Heart left ventricle (tissue), 16 donors: ENCODE measurements at regions of chr17 and their contacts with region 1.

Region 1: GRCh38 chr17:47229535-47230443 is 20.6 kb downstream of the MYL4 start:
- DNase-seq: peak; percentile 85 to 87 (median 86)
- ATAC-seq: peak; percentile 64 to 85 (median 82)
- H3K4me3 ChIP-seq: peak overlapping the region in 10 of 12 donors; percentile 6 to 44 (median 30)
- H3K27ac ChIP-seq: peak overlapping the region in 6 of 12 donors; percentile 1 to 53 (median 31)
- H3K4me1 ChIP-seq: peaks cover 6 to 35% (median 22%) of the 10 kb centered on the region in 12 donors
- H3K27me3 ChIP-seq: no peaks in the 10 kb centered on the region
- CTCF ChIP-seq: peak; percentile 97 to 100 (median 99)
- POLR2A ChIP-seq: peak in 1 of 2 donors; percentile 27

Region 2: DNA sequence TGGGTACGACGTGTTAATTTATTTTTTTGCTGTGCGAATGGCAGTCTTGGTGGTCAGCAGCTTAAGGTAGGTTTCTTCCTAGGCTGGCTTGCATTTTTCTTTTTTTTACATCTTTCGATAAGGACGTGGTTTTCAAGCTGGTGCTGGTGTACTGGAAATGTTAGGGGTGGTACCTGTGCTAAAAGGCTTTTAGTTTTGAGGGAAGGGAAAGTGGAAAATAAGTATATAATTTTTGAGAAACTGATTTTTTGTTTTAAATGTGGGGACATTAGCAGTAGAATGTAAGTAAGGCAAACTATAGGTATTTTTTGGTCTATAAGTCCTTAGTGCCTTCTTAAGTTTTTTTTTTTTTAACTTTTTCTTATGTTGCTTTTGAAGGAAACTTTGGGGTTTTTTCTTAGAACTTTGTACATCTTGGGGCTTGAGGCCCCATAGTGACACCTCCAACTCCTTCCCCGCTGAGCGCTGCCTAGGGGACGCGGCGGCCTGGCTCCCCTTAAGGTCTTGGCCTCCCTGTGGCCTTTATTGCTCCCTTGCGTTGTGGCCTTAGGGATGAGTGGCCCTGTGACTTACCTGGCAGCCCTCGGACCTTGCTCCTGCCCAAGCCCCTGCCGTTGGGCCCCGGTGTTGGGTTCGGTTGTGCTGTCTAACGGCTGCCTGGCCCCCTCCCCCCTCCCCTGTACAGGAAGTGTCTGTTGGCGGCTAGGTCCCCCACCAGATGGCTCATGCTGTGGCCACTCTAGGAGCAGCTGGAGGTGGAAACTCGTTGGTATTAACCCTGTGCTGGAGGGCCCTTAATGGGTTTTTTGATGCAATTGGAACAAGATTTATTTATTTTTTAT is 162.7 kb before region 1 on chr17:
- intact Hi-C with region 1: no loop called
- DNase-seq: peak; percentile 81 to 89 (median 85)
- ATAC-seq: peak; percentile 95 to 98 (median 96)
- H3K4me3 ChIP-seq: peak overlapping the region; percentile 51 to 93 (median 81)
- H3K27ac ChIP-seq: peak overlapping the region; percentile 75 to 92 (median 88)
- H3K4me1 ChIP-seq: peaks cover 2 to 35% (median 12%) of the 10 kb centered on the region in 12 donors
- H3K27me3 ChIP-seq: no peaks in the 10 kb centered on the region
- CTCF ChIP-seq: peak in 6 of 12 donors; percentile 11 to 38 (median 24)
- POLR2A ChIP-seq: peak in 1 of 2 donors; percentile 53

Region 3: GRCh38 chr17:47188876-47189731 is 40.7 kb before region 1 on chr17 and contains the start of gene CDC27:
- intact Hi-C with region 1: loop called in 2 of 10 experiments (anchors 2 kb)
- DNase-seq: peak; percentile 99
- ATAC-seq: peak; percentile 97 to 98 (median 98)
- H3K4me3 ChIP-seq: peak within 1 kb of the TSS; percentile 61 to 94 (median 84)
- H3K27ac ChIP-seq: peak within 1 kb of the TSS; percentile 90 to 99 (median 97)
- H3K4me1 ChIP-seq: peaks cover 8 to 46% (median 35%) of the 10 kb centered on the region in 12 donors
- H3K27me3 ChIP-seq: no peaks in the 10 kb centered on the region
- CTCF ChIP-seq: peak in 1 of 12 donors; percentile 7
- POLR2A ChIP-seq: peak in 1 of 2 donors; percentile 46
- total RNA-seq, gene CDC27: 43.7 to 110 (median 79.7) TPM

Region 4: DNA sequence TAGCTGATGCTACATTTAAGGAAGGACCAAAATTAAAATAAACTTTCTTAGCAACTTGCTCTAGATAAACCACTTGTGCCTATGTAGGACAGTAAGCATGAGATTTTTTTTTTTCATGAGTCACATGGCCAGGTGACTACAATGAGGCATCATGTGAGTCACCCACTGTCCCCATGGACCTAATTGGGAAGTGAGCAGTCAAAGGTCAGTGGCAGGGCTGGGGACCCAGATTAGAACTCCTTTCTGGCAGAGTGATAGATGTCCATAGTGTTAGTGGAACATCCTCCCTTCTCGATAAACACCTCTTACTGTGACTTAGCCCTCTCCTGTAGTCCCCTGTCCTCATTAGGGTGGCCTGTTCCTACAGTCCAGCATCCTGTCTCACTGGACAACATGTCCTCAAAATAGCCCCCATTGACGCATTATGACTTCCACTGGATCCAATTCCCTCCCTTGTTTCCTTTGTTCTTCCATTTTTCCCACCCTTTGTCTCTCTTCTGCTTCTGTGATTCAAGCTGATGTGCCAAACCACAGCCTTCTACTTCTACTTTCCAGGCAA is 36.3 kb after region 1 on chr17:
- intact Hi-C with region 1: loop called in 1 of 10 experiments (anchors 5 kb)
- DNase-seq: peak in 1 of 5 donors; percentile 65
- ATAC-seq: peak in 3 of 4 donors; percentile 55 to 77 (median 75)
- H3K4me3 ChIP-seq: no peak overlapping the region
- H3K27ac ChIP-seq: peak overlapping the region in 4 of 12 donors; percentile 30 to 65 (median 40)
- H3K4me1 ChIP-seq: peaks cover 0 to 24% (median 8%) of the 10 kb centered on the region in 12 donors
- H3K27me3 ChIP-seq: no peaks in the 10 kb centered on the region
- CTCF ChIP-seq: no peak
- POLR2A ChIP-seq: no peak

Region 5: GRCh38 chr17:47279062-47279736 is 49.4 kb after region 1 on chr17:
- intact Hi-C with region 1: loop called in 2 of 10 experiments (anchors 2 to 5 kb)
- DNase-seq: peak; percentile 75 to 83 (median 77)
- ATAC-seq: peak; percentile 63 to 84 (median 78)
- H3K4me3 ChIP-seq: peak overlapping the region in 2 of 12 donors; percentile 2 to 6
- H3K27ac ChIP-seq: peak overlapping the region; percentile 75 to 92 (median 86)
- H3K4me1 ChIP-seq: peaks cover 2 to 76% (median 64%) of the 10 kb centered on the region in 12 donors
- H3K27me3 ChIP-seq: no peaks in the 10 kb centered on the region
- CTCF ChIP-seq: peak in 2 of 12 donors; percentile 23 to 27
- POLR2A ChIP-seq: peak in 1 of 2 donors; percentile 11

Region 6: DNA sequence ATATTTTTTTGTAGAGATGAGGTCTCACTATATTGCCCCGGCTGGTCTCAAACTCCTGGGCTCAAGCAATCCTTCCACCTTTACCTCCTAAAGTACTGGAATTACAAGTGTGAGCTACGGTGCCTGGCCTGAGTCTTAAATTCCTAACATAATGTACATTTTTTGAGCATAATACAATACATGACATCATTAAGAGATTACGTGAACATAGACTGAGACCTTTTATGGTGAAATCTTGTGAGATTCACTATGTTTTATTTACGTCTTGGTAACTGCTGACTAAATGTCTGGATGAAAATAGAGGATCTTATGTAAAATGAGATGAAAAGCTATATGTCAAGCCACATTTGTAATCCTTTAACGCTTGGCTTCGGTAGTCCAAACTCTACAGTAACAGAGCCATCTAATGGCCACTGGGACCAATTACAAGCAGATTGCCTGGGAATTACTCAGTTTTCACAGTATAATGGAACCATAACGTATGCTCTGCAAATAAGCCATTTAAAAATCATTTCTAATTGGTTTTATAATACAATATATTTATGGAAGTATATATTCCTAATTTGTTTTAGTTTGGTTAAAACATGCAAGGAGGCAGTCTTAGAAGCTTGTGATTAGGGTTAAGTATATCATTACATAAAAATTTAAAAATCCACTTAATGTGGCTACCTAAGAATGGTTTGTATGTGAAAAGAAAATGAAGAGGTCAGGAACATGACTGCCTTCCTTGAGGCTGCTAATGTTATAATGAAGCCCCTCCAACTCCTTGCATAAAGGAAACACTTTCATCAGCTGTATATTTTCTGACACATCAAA is 85.9 kb after region 1 on chr17:
- intact Hi-C with region 1: loop called (anchors 1 to 2 kb)
- DNase-seq: peak in 2 of 5 donors; percentile 31 to 37
- ATAC-seq: peak; percentile 65 to 84 (median 80)
- H3K4me3 ChIP-seq: no peak overlapping the region
- H3K27ac ChIP-seq: peak overlapping the region in 3 of 12 donors; percentile 31 to 66 (median 64)
- H3K4me1 ChIP-seq: peaks cover 0 to 15% (median 2%) of the 10 kb centered on the region in 12 donors
- H3K27me3 ChIP-seq: no peaks in the 10 kb centered on the region
- CTCF ChIP-seq: peak; percentile 70 to 93 (median 86)
- POLR2A ChIP-seq: no peak

Region 7: DNA sequence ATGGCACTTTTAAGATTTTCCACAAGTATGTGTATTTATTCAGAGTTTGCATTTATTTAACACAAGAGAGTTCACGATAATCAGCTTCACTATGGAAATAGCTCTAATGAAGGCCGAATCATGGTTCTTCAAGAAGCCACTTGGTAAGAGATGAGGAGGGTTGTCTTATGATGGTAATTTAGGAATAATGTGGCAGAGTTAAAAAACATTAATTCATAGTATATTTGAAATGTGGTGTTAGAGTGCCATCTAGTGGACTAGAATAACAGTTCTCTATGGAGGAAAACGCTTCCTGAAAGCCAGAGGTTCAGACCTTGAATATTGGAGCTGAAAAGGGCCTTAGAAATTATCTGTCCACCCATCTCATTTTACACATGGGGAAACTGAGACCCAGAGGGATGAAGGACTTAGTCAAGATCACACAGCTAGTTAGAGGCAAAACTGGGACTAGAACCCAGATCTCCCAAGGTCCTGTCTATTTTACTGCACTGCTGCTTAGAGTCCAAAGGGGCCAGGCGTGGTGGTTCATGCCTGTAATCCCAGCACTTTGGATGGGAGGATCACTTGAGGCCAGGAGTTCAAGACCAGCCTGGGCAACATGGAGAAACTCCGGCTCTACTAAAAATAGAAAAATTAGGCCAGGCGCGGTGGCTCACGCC is 386.1 kb after region 1 on chr17:
- intact Hi-C with region 1: loop called in 5 of 10 experiments (anchors 5 to 10 kb)
- DNase-seq: no peak
- ATAC-seq: peak; percentile 36 to 58 (median 47)
- H3K4me3 ChIP-seq: no peak overlapping the region
- H3K27ac ChIP-seq: peak overlapping the region in 1 of 12 donors; percentile 19
- H3K4me1 ChIP-seq: peaks cover 0 to 24% (median 10%) of the 10 kb centered on the region in 12 donors
- H3K27me3 ChIP-seq: no peaks in the 10 kb centered on the region
- CTCF ChIP-seq: peak; percentile 66 to 86 (median 80)
- POLR2A ChIP-seq: no peak

Region 8: GRCh38 chr17:47802341-47803022 is 572.7 kb after region 1 on chr17:
- intact Hi-C with region 1: loop called in 1 of 10 experiments (anchors 10 kb)
- DNase-seq: no peak
- ATAC-seq: peak; percentile 55 to 60 (median 58)
- H3K4me3 ChIP-seq: no peak overlapping the region
- H3K27ac ChIP-seq: no peak overlapping the region
- H3K4me1 ChIP-seq: peaks cover 0 to 10% (median 0%) of the 10 kb centered on the region in 12 donors
- H3K27me3 ChIP-seq: peaks cover 0 to 6% (median 0%) of the 10 kb centered on the region in 9 donors
- CTCF ChIP-seq: peak; percentile 27 to 60 (median 50)
- POLR2A ChIP-seq: no peak